Transverse colon (tissue), 4 donors: ENCODE measurements at regions of chr3 and their contacts with region 1.

Region 1: DNA sequence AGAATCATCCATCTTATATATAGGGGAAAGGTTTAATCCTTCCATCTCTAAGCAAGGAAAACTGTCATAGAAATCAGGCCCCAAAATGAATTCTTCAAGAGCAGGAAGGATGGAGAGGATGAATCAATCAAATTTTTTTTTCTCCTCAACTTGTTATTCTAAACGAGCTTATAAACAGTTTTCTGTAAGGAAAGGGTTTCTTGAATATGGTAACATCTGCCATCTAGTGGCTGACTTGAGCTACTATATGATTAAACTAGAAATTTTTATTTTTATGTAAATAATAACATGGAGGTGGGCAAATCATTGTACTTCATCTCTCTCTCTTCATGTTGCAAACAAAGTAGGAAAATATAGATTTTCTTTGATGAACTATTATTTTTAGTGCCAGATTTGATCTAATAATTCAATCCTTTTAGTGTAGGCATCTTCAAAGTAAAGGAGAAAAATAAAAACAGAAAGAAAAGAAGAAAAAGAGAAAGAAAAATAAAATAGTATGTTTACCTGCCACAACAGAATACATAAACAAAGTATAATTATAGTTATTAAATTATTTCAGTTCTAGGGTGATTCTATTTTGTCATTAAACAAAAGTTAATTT is 146.6 kb downstream of the SERPINI1 start:
- DNase-seq: no peak
- H3K4me3 ChIP-seq: no peak overlapping the region
- H3K27ac ChIP-seq: no peak overlapping the region
- H3K4me1 ChIP-seq: peaks cover 0 to 5% (median 0%) of the 10 kb centered on the region in 4 donors
- H3K27me3 ChIP-seq: no peaks in the 10 kb centered on the region
- CTCF ChIP-seq: peak; percentile 60 to 73 (median 66)
- EP300 ChIP-seq: no peak
- POLR2A ChIP-seq: no peak

Region 2: GRCh38 chr3:167372138-167372537 is 510.0 kb before region 1 on chr3:
- in situ Hi-C with region 1: loop called in 2 of 4 experiments (anchors 10 to 25 kb)
- intact Hi-C with region 1: no loop called
- DNase-seq: no peak
- H3K4me3 ChIP-seq: no peak overlapping the region
- H3K27ac ChIP-seq: no peak overlapping the region
- H3K4me1 ChIP-seq: no peaks in the 10 kb centered on the region
- H3K27me3 ChIP-seq: no peaks in the 10 kb centered on the region
- CTCF ChIP-seq: no peak
- EP300 ChIP-seq: no peak
- POLR2A ChIP-seq: no peak

Region 3: DNA sequence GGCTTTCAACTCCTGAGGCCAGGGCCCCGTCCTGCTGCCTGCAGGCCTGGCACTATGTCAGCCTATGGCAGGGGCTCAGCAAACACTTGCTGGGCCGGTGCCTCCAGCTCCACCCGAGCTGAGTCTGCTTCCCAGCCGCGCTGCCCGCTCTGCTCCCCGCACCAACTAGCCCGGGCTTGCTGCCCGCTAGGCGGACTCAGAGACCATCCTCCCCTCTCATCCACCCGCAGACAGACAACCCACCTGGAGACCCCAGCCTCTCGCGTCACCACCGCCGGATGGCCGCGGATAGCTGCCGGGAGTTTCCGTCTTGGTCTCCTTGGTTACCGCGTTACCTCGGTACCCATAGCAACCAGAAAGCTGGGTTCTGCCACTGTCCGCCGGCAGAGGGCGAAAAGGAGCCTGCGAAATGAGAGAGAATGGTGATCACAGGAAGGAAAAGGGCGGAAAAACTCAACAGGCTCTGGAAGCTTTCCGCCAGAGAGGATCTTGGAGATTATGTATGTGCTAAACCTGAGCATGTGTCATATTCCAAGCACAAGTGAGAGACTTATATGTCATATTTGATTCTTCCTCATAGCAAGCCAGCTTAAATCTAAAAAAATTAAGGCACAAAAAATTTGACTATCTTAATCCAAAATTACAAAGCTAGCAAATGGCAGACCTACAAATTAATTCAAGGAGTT is 502.0 kb before region 1 on chr3 and contains the start of gene ZBBX:
- in situ Hi-C with region 1: loop called in 2 of 4 experiments (anchors 10 to 25 kb)
- intact Hi-C with region 1: no loop called
- DNase-seq: peak; percentile 87
- H3K4me3 ChIP-seq: peak within 1 kb of the TSS in 2 of 4 donors; percentile 18 to 48
- H3K27ac ChIP-seq: no peak within 1 kb of the TSS
- H3K4me1 ChIP-seq: peaks cover 0 to 8% (median 2%) of the 10 kb centered on the region in 4 donors
- H3K27me3 ChIP-seq: no peaks in the 10 kb centered on the region
- CTCF ChIP-seq: peak; percentile 75 to 85 (median 81)
- EP300 ChIP-seq: no peak
- POLR2A ChIP-seq: no peak
- total RNA-seq, gene ZBBX: not detected